ENCODE measurements at regions of chr7 and their contacts with region 1.

Region 1: GRCh38 chr7:34928049-34928448 is 109.2 kb downstream of the DPY19L1 start:
- DNase-seq: peak; percentile 56 to 93
- H3K4me3 ChIP-seq: no peak overlapping the region
- H3K27ac ChIP-seq: no peak overlapping the region
- H3K4me1 ChIP-seq: no peaks in the 10 kb centered on the region; a peak in 2 of 7 replicates
- H3K27me3 ChIP-seq: no peaks in the 10 kb centered on the region
- CTCF ChIP-seq: peak; percentile 76 to 85 (median 77)
- EP300 ChIP-seq: no peak
- POLR2A ChIP-seq: no peak
- RAD21 ChIP-seq: peak; percentile 64 to 75

Region 2: DNA sequence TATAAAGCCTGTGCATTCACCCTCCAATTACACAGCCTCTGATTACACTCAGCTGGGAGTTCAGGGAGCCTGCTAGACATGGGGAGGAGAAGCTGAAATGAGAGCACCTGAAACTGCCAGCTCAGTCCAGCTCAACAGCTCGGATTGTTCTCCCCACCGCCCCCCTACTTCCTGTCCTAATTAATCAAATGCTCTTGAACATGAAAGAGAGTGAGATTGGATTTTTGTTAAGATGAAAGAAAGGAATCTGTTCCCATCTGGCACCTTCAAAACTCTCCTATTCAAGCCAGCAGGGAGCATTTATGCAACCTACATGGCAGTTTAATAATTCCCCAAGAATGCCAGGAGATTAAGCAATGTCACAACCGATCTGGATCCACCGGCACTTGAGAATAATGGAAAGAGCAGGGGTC is 172.0 kb before region 1 on chr7:
- CTCF ChIA-PET with region 1: interaction called, 10 read pairs
- POLR2A ChIA-PET with region 1: no interaction called
- DNase-seq: no peak
- H3K4me3 ChIP-seq: no peak overlapping the region
- H3K27ac ChIP-seq: no peak overlapping the region
- H3K4me1 ChIP-seq: no peaks in the 10 kb centered on the region; a peak in 2 of 7 replicates
- H3K27me3 ChIP-seq: no peaks in the 10 kb centered on the region
- CTCF ChIP-seq: no peak
- EP300 ChIP-seq: no peak
- POLR2A ChIP-seq: no peak
- RAD21 ChIP-seq: no peak

Region 3: DNA sequence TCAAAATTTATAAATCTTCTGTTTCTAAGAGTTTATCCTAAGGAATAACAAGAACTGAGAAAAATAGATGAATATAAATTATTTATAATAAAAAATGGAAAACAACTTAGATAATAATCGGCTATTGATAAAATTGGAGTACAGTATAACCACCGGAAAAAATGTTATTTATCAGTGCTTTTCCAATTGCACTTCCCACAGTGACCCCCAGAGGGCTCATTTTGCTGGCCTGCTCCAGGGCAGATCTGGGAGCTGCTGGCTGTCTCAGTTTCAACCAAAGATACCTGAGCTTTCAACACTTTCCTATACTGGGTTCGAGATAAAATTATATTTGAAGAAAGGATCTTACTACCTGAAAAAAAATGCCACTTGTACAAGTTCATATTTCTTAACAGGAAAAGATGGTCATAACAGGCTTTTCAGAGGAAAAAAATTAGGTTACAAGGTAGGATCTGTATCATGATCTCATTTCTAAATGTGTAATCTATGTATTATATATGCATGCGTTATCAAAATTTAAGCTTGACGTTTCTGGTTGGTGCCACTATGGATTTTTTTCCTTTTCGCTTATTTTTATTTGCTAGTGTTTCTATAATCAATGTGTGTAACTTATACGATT is 104.3 kb before region 1 on chr7:
- CTCF ChIA-PET with region 1: interaction called, 15 read pairs
- POLR2A ChIA-PET with region 1: no interaction called
- DNase-seq: peak in 1 of 2 experiments; percentile 77
- H3K4me3 ChIP-seq: no peak overlapping the region
- H3K27ac ChIP-seq: no peak overlapping the region
- H3K4me1 ChIP-seq: no peaks in the 10 kb centered on the region
- H3K27me3 ChIP-seq: no peaks in the 10 kb centered on the region
- CTCF ChIP-seq: peak; percentile 66 to 80 (median 69)
- EP300 ChIP-seq: no peak
- POLR2A ChIP-seq: no peak
- RAD21 ChIP-seq: peak; percentile 73 to 81

Region 4: DNA sequence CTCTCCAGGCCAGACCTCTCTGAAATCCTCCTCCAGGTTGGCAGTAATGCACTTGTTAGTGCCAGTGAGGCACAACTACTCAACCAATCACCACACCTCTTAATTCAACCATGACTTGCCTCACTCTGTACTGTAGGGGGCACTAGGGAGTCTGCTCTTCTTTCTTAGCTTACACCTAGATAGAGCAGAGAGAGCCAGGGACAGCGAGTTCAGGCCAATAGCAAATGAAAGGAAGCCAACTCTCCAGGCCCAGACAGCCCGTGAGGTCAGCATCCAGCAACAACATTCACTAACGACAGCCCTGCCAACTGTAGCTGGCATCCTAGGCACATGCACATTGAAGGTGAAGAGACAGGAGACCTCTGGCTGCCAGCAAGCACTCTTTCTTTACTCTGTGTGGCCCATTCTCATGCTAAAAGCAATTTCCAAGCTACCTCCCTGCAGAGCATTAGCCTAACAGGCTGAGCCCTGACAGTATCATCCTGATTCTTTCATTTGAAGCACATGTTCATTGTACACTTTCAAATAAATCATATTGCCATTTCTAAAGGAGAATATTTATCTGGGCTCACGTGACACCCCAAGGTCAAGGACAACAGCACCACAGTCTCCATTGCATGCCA is 27.0 kb before region 1 on chr7:
- CTCF ChIA-PET with region 1: interaction called, 17 read pairs
- POLR2A ChIA-PET with region 1: no interaction called
- DNase-seq: peak in 1 of 2 experiments; percentile 63
- H3K4me3 ChIP-seq: no peak overlapping the region
- H3K27ac ChIP-seq: no peak overlapping the region
- H3K4me1 ChIP-seq: peaks cover 2 to 10% (median 9%) of the 10 kb centered on the region in 4 experiments; a peak in 5 of 7 replicates
- H3K27me3 ChIP-seq: no peaks in the 10 kb centered on the region
- CTCF ChIP-seq: peak in 2 of 3 experiments; percentile 69 to 84; a peak in 3 of 4 replicates
- EP300 ChIP-seq: no peak
- POLR2A ChIP-seq: no peak
- RAD21 ChIP-seq: peak; percentile 49 to 72

Region 5: DNA sequence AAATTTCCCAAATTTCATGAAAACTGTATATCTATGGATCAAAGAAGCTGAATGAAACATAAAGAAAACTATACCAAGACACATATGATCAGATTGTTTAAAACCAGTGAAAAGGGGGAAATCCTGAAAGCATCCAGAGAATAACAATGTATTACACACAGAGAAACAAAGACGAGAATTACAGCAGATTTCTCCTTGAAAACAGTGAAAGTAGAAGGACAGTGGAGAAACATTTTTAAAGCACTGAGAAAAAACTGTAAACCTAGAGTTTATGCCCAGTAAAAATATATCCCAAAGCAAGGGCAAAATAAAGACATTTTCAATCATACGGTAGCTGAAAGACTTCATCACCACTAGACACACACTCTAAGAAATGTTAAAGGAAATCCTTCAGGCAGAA is 11.8 kb before region 1 on chr7:
- CTCF ChIA-PET with region 1: interaction called, 13 read pairs
- POLR2A ChIA-PET with region 1: no interaction called
- DNase-seq: no peak
- H3K4me3 ChIP-seq: no peak overlapping the region
- H3K27ac ChIP-seq: no peak overlapping the region
- H3K4me1 ChIP-seq: no peaks in the 10 kb centered on the region
- H3K27me3 ChIP-seq: no peaks in the 10 kb centered on the region
- CTCF ChIP-seq: no peak
- EP300 ChIP-seq: no peak
- POLR2A ChIP-seq: no peak
- RAD21 ChIP-seq: no peak

Region 6: GRCh38 chr7:34939175-34939574 is 11.1 kb after region 1 on chr7:
- CTCF ChIA-PET with region 1: interaction called, 13 read pairs
- POLR2A ChIA-PET with region 1: no interaction called
- DNase-seq: no peak
- H3K4me3 ChIP-seq: no peak overlapping the region
- H3K27ac ChIP-seq: 0 out of 2 replicates have a peak overlapping the region, but pooled peaks have one; percentile 2
- H3K4me1 ChIP-seq: peaks cover 0 to 12% (median 7%) of the 10 kb centered on the region in 4 experiments; a peak in 5 of 7 replicates
- H3K27me3 ChIP-seq: no peaks in the 10 kb centered on the region
- CTCF ChIP-seq: no peak
- EP300 ChIP-seq: no peak
- POLR2A ChIP-seq: no peak
- RAD21 ChIP-seq: no peak